Ovary (tissue), 10 donors: ENCODE measurements at regions of chr1 and their contacts with region 1.

Region 1: GRCh38 chr1:32138943-32139342 is 31.1 kb downstream of the KPNA6 start:
- DNase-seq: no peak
- H3K4me3 ChIP-seq: no peak overlapping the region
- H3K27ac ChIP-seq: no peak overlapping the region
- H3K4me1 ChIP-seq: peaks cover 2% of the 10 kb centered on the region
- H3K27me3 ChIP-seq: no peaks in the 10 kb centered on the region
- CTCF ChIP-seq: no peak
- EP300 ChIP-seq: no peak
- POLR2A ChIP-seq: no peak

Region 2: DNA sequence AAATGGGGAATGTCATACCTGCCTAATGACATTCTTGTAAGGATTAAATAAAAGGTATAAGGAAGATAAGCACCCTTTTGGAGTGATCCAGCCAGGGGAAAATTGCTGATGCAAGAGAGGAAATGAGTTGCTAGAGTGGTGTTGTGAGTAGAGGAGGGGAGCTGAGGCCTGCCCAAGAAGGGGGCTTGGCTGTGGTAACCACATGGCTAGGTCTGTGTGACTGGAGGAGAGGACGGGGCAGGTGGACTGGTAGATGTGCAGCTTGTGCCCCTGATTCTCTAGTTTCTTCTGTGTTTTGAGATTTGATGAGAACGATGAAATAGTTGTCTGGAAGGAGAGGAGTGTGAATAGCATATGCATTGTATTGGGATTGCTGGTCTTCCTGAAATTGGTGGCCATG is 47.1 kb after region 1 on chr1:
- intact Hi-C with region 1: loop called in 1 of 4 experiments (anchors 5 kb)
- DNase-seq: no peak
- H3K4me3 ChIP-seq: no peak overlapping the region
- H3K27ac ChIP-seq: no peak overlapping the region
- H3K4me1 ChIP-seq: peaks cover 7% of the 10 kb centered on the region
- H3K27me3 ChIP-seq: no peaks in the 10 kb centered on the region
- CTCF ChIP-seq: no peak
- EP300 ChIP-seq: no peak
- POLR2A ChIP-seq: no peak

Region 3: DNA sequence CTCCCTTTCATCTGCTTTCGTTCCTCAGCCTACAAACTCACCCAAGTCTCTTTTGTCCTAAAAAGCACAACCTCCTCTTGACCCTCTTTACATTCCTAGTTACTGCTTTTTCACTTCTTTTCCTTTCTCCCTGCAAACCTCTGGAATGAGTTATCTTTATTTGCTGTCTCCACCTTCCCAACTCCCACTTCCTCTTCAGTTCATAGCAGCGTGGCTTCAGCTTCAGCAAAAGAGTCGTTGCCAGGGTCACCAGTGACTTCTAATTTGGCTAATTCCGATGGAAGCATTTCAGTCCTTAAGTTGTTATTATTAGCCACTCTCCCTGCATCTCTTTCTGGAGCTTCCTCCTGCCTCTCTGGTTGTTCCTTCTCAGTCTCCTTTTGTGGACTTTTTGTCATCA is 768.5 kb after region 1 on chr1:
- intact Hi-C with region 1: no loop called
- DNase-seq: no peak
- H3K4me3 ChIP-seq: no peak overlapping the region
- H3K27ac ChIP-seq: no peak overlapping the region
- H3K4me1 ChIP-seq: no peaks in the 10 kb centered on the region
- H3K27me3 ChIP-seq: no peaks in the 10 kb centered on the region
- CTCF ChIP-seq: no peak
- EP300 ChIP-seq: no peak
- POLR2A ChIP-seq: no peak